AG04449 (cell line): ENCODE measurements at regions of chr11 and their contacts with region 1.

Region 1: DNA sequence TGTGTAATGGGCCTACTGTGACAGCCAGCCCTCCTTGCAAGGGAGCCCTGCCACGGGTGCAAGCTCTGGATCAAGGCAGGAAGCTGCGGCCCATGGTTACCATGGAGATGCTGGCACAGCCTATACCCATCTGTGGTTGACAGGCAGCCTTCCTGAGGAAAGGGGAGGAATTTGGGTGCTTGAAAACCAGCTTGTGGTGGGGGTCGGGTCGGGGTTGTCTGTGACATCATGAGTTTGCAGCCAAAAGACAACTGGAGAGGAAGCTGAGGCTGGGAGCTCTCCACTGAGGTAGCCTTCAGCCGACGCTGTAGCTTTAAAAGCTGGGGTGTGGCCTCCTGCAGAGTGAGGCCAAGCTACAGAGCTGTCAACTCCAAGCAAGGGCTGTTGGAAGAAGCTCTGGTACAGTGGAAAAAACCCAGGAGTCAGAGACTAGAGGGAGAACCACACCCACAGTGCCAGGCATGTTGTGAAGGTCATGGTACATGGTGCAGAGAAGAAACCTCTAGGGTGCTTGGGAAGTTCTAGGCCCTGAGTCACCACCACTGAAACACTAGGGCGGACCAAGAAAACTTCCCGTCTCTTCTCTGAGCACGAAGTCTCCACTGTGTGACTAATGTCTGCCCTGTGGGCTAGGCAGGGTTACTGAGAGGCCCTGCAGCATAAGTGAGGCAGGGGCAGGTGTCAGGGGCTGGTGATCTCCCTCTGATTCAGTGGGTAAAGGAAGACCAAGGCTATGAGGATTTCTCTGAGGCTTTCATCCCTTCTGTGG is 10.8 kb upstream of the LDHA start:
- DNase-seq: peak; percentile 90
- H3K4me3 ChIP-seq: peak overlapping the region; percentile 4; the same call in 1 of the 2 replicates
- CTCF ChIP-seq: no peak

Region 2: GRCh38 chr11:18310800-18311340 is 72.7 kb before region 1 on chr11:
- CTCF ChIA-PET with region 1: no interaction called
- POLR2A ChIA-PET with region 1: interaction called, 11 read pairs
- DNase-seq: no peak
- H3K4me3 ChIP-seq: no peak overlapping the region
- CTCF ChIP-seq: no peak

Region 3: GRCh38 chr11:18368221-18368620 is 15.4 kb before region 1 on chr11:
- CTCF ChIA-PET with region 1: no interaction called
- POLR2A ChIA-PET with region 1: interaction called, 15 read pairs
- DNase-seq: no peak
- H3K4me3 ChIP-seq: no peak overlapping the region
- CTCF ChIP-seq: no peak

Region 4: GRCh38 chr11:18485913-18486528 is 102.4 kb after region 1 on chr11:
- CTCF ChIA-PET with region 1: no interaction called
- POLR2A ChIA-PET with region 1: no interaction called
- DNase-seq: no peak
- H3K4me3 ChIP-seq: no peak overlapping the region
- CTCF ChIP-seq: no peak

Region 5: GRCh38 chr11:18706330-18707243 is 323.0 kb after region 1 on chr11:
- CTCF ChIA-PET with region 1: no interaction called
- POLR2A ChIA-PET with region 1: no interaction called
- DNase-seq: no peak
- H3K4me3 ChIP-seq: peak overlapping the region; percentile 37
- CTCF ChIP-seq: no peak